PC-3 (cell line): ENCODE measurements at regions of chr14 and their contacts with region 1.

Region 1: DNA sequence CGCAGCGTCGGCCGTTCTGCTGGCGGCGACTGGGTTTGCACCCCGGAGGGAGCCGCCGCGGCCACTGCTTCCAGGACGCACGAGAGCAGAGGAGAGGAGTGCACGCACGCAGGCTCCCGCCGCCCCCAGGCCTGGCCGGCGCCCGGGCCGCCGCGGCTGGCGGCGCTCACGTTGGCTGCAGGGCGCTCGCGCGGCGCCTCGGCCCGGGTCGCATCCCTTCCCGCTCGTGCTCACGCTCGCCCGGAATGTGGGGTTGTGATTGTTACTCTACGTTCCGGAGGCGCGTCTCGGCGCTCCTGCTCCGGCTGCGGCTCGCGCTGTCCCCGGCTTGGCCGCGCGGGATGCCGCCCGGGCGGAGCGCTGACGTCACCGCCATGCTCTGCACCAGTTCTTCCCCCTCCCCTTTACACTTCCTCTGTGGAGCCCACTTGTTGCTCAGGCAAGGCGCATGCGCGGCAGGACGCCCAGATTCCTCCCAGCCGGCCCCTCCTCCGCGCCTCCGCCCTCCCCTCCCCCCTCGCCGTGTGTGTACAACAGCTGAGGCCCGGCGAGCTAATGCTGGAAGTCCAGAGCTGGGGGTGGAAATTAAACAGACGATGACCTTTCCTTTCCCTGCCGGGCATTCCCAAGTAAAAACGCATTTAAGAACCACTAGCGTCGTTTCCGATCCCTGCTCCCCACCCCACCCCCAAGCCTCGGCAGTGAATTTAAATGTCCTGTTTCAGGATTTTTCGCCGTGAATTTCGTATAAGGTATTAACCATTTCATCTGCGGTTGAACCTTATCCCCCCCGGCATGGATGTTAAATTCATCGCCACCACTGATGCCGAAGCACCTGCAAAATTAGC is at the start of gene IRF2BPL:
- DNase-seq: peak; percentile 97
- ATAC-seq: peak; percentile 48
- H3K4me3 ChIP-seq: peak within 1 kb of the TSS; percentile 99
- H3K27ac ChIP-seq: peak within 1 kb of the TSS; percentile 91
- H3K4me1 ChIP-seq: peaks cover 48% of the 10 kb centered on the region
- H3K27me3 ChIP-seq: no peaks in the 10 kb centered on the region
- CTCF ChIP-seq: no peak
- total RNA-seq, gene IRF2BPL: 113 and 146 TPM in 2 replicates

Region 2: GRCh38 chr14:76962303-76962660 is 66.3 kb before region 1 on chr14:
- CTCF ChIA-PET with region 1: interaction called, 13 read pairs
- POLR2A ChIA-PET with region 1: no interaction called
- intact Hi-C with region 1: loop called (anchors 2 kb)
- DNase-seq: no peak
- ATAC-seq: peak; percentile 4
- H3K4me3 ChIP-seq: peak overlapping the region; percentile 59
- H3K27ac ChIP-seq: peak overlapping the region; percentile 86
- H3K4me1 ChIP-seq: peaks cover 49% of the 10 kb centered on the region
- H3K27me3 ChIP-seq: no peaks in the 10 kb centered on the region
- CTCF ChIP-seq: no peak

Region 3: DNA sequence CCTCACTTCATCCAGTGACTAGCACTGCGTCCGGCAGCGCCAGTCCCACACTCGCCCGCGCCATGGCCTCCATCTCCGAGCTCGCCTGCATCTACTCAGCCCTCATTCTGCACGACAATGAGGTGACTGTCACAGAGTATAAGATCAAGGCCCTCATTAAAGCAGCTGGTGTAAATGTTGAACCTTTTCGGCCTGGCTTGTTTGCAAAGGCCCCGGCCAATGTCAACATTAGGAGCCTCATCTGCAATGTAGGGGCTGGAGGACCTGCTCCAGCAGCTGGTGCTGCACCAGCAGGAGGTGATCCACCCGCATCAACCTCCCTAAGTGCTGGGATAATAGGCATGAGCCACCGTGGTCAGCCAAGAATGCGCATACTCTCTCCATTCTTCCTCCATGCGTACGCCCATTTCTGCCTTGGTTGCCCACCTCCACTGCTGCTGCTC is 60.0 kb before region 1 on chr14:
- CTCF ChIA-PET with region 1: interaction called, 12 read pairs
- POLR2A ChIA-PET with region 1: no interaction called
- intact Hi-C with region 1: no loop called
- DNase-seq: no peak
- ATAC-seq: no peak
- H3K4me3 ChIP-seq: no peak overlapping the region
- H3K27ac ChIP-seq: no peak overlapping the region
- H3K4me1 ChIP-seq: no peaks in the 10 kb centered on the region
- H3K27me3 ChIP-seq: no peaks in the 10 kb centered on the region
- CTCF ChIP-seq: no peak

Region 4: DNA sequence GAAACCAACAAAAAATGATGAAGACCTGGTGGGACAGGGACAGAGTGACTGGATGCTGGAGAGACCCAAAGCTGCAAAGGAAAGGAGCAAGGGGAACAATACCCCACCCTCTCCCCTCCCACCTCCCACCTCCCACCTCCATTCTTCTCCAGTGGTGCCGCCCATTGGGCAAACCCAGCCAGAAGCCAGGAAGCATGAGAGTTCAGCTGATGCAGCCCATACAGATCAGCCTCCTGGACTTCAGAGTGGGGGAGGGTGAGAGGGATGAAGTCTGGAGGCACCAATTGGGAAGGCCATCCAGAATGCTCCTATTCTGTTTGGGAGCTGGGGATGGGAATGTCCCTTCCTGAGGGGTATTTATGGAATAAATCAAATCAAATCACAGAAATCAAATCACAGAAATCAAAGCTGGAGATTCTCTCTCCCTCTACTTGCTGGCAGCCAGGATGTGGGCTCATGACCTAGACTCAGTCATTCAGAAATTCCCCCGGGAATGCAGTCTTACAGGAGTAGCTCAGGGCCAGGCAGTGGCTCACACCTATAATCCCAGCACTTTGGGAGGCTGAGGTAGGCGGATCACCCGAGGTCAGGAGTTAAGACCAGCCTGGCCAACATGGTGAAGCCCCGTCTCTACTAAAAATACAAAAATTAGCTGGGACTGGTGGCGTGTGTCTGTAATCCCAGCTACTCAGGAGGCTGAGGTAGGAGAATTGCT is 31.2 kb before region 1 on chr14:
- CTCF ChIA-PET with region 1: no interaction called
- POLR2A ChIA-PET with region 1: no interaction called
- intact Hi-C with region 1: no loop called
- DNase-seq: peak; percentile 43
- ATAC-seq: no peak
- H3K4me3 ChIP-seq: no peak overlapping the region
- H3K27ac ChIP-seq: no peak overlapping the region
- H3K4me1 ChIP-seq: peaks cover 6% of the 10 kb centered on the region
- H3K27me3 ChIP-seq: no peaks in the 10 kb centered on the region
- CTCF ChIP-seq: no peak

Region 5: DNA sequence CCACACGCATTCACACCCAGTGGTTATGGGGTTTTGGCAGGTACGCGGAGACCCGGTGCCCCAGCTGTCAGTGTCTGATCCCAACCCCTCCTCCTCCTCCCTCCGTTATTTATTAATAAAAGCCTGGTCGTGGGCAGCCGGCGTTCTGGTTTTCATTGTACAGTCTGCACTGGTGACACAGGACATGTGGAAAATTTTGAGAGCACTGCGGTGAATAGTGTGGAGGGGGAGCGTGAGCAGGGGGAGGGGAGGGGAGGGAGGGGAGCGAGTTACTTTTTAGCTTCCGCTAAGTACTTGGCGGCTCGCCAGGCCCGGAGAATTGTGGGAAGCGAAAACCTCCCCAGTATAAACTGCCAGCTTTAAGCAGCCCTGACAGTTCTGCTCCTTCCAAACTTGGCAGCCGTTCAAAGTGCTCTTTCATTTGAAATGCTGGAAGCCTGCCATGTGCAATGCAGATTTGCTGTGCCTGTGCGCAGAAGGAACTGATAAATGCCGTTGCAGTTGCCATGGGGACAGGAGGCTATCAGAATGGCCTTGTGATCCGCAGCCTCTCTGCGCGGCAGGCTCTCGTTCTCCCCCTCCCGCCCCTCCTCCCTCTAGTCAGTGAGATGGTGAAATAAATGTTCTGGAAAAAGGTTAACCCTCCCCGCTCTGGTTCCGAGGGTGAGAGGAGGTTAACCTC is 11.6 kb after region 1 on chr14:
- CTCF ChIA-PET with region 1: interaction called, 3 read pairs
- POLR2A ChIA-PET with region 1: interaction called, 50 read pairs
- intact Hi-C with region 1: loop called (anchors 1 kb)
- DNase-seq: peak; percentile 100
- ATAC-seq: peak; percentile 33
- H3K4me3 ChIP-seq: peak overlapping the region; percentile 59
- H3K27ac ChIP-seq: peak overlapping the region; percentile 94
- H3K4me1 ChIP-seq: peaks cover 93% of the 10 kb centered on the region
- H3K27me3 ChIP-seq: no peaks in the 10 kb centered on the region
- CTCF ChIP-seq: no peak

Region 6: GRCh38 chr14:77097700-77098528 is 69.3 kb after region 1 on chr14 and contains the start of gene CIPC:
- CTCF ChIA-PET with region 1: no interaction called
- POLR2A ChIA-PET with region 1: interaction called, 21 read pairs
- intact Hi-C with region 1: loop called (anchors 2 kb)
- DNase-seq: peak; percentile 100
- ATAC-seq: peak; percentile 87
- H3K4me3 ChIP-seq: peak within 1 kb of the TSS; percentile 88
- H3K27ac ChIP-seq: peak within 1 kb of the TSS; percentile 86
- H3K4me1 ChIP-seq: peaks cover 27% of the 10 kb centered on the region
- H3K27me3 ChIP-seq: no peaks in the 10 kb centered on the region
- CTCF ChIP-seq: no peak
- total RNA-seq, gene CIPC: 26.0 and 26.6 TPM in 2 replicates